Naive thymus-derived CD4-positive, alpha-beta T cell (primary cell): ENCODE measurements at regions of chr9 and their contacts with region 1.

Region 1: DNA sequence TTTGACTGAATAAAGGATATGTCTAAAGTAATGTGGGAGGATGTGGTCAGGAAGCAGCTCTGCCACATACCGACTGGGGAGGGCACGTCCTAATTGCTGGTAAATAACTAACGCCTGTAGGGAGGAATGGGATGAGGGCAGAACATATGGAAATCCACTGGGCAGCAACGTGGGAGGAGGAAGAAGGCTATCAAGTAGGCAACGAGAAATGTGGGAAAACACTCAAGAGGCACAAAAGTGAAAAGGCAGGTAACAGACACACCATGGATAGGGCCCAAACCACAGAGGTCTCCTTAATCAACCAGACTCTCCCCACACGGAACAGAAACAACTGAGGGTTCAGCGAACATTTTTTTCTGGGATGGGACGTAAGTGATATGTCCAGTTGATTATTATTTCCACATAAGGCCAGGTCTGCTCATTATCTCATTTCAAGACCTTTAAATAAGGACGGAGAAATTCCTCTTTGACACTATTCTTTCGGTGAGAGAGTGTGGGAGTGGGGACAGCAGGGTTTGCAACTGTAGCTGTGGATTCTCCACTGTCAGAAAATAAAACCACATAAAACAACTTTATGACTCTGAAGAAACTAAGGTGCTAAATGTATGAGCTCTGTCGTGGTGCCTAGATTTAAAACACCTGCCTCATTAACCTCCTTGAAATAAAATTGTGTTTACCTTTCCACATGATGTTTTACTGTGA is 17.0 kb downstream of the IARS1 start:
- DNase-seq: no peak
- ATAC-seq: no peak
- H3K4me3 ChIP-seq: no peak overlapping the region
- H3K4me3 Mint-ChIP-seq: peak overlapping the region in 9 of 10 donors; percentile 28 to 83 (median 42)
- H3K27ac ChIP-seq: peak overlapping the region; percentile 22
- H3K27ac Mint-ChIP-seq: peak overlapping the region; percentile 59 to 90 (median 75)
- H3K4me1 ChIP-seq: peaks cover 11 to 22% of the 10 kb centered on the region in 2 donors
- H3K4me1 Mint-ChIP-seq: peaks cover 12 to 36% (median 28%) of the 10 kb centered on the region in 7 donors
- H3K27me3 ChIP-seq: no peaks in the 10 kb centered on the region
- H3K27me3 Mint-ChIP-seq: no peaks in the 10 kb centered on the region

Region 2: GRCh38 chr9:92312887-92313623 is 36.6 kb after region 1 on chr9:
- CTCF ChIA-PET with region 1: no interaction called
- POLR2A ChIA-PET with region 1: no interaction called
- intact Hi-C with region 1: loop called in 1 of 2 experiments (anchors 5 kb)
- DNase-seq: no peak
- ATAC-seq: no peak
- H3K4me3 ChIP-seq: no peak overlapping the region
- H3K4me3 Mint-ChIP-seq: peak overlapping the region in 3 of 10 donors; percentile 18 to 30 (median 22)
- H3K27ac ChIP-seq: no peak overlapping the region
- H3K27ac Mint-ChIP-seq: peak overlapping the region in 6 of 9 donors; percentile 20 to 77 (median 68)
- H3K4me1 ChIP-seq: peaks cover 0 to 4% of the 10 kb centered on the region in 2 donors
- H3K4me1 Mint-ChIP-seq: peaks cover 19 to 47% (median 34%) of the 10 kb centered on the region in 7 donors
- H3K27me3 ChIP-seq: no peaks in the 10 kb centered on the region
- H3K27me3 Mint-ChIP-seq: no peaks in the 10 kb centered on the region